Mammary epithelial cell (primary cell): ENCODE measurements at regions of chr18 and their contacts with region 1.

Region 1: GRCh38 chr18:812376-813171 is 532 bp upstream of the YES1 start:
- DNase-seq: peak; percentile 75
- H3K4me3 ChIP-seq: peak overlapping the region; percentile 75 to 100 (median 95)
- H3K27ac ChIP-seq: peak overlapping the region; percentile 92
- H3K4me1 ChIP-seq: peaks cover 6% of the 10 kb centered on the region
- H3K27me3 ChIP-seq: no peaks in the 10 kb centered on the region
- CTCF ChIP-seq: no peak

Region 2: DNA sequence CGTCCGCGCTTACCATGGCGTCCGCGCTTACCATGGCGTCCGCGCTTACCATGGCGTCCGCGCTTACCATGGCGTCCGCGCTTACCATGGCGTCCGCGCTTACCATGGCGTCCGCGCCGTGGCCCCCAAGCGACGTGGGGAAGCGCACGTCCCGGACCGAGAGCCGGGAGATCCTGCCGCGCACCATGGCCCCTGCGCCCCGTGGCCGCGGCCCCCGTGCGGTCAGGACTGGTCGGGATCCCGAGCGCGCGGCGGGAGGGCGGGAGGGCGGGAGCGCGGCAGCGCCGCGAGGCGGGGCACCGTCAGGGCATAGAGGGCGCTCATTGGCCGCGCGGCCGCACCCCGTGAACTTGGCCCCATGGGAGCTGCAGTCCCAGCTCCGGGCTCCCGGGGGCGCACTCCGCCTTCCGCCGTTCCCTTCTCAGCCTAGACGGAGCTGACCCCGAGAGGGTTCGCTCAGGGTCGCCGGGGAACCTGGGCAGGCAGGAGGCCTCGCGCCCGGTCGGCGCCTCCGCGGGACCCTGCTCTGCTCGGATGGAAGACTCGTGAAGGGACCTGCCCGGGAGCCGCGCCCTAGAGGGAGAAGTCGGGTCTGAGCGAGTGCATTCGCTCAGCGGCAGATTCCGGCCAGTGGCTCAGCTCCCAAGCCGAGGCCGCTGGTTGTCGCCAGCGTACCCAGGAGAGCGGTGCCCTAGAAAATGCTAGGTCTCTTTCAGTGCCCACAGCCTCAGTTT is 100.0 kb before region 1 on chr18 and contains the start of gene ENOSF1:
- CTCF ChIA-PET with region 1: no interaction called
- dilution Hi-C with region 1: no loop called
- in situ Hi-C with region 1: no loop called
- intact Hi-C with region 1: loop called (anchors 2 kb)
- DNase-seq: peak; percentile 73
- H3K4me3 ChIP-seq: peak within 1 kb of the TSS; percentile 62 to 92 (median 78)
- H3K27ac ChIP-seq: peak within 1 kb of the TSS; percentile 88
- H3K4me1 ChIP-seq: peaks cover 12% of the 10 kb centered on the region
- H3K27me3 ChIP-seq: no peaks in the 10 kb centered on the region
- CTCF ChIP-seq: peak; percentile 54 to 81
- total RNA-seq, gene ENOSF1: 24.5 to 78.7 TPM

Region 3: DNA sequence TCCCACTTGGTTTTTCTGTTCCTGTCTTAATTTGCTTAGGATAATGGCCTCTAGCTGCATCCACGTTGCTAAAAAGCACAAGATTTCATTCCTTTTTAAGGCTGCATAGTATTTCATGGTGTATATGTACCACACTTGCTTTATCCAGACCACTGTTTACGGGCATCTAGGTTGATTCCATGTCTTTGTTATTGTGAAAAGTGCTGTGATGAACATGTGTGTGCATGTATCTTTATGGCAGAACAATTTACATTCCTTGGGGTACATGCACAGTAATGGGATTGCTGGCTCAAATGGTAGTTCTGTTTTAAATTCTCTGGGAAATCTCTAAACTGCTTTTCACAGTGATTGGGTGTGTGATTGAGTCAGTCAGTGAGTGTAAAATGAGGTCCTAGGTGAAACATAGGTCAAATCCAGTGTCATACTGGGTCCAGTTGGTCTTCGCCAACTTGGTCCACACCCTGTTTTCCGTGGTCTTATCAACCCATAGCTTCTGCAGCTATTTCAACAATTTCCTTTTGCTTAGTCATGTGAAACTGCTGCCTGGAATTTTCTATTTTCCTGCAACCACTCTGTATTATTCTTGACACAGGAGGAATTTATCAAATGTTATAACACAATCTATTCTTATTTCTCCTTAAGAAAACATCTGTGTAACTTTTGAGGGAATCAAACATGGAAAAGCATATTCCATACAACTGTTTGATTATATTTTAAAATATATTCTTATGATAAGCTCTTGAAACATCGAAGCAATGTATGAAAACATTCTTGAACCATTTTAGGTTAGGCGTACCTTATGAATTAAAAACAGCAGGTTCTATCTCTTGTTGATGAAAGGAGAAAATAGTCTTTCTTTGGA is 175.0 kb after region 1 on chr18:
- CTCF ChIA-PET with region 1: no interaction called
- dilution Hi-C with region 1: no loop called
- in situ Hi-C with region 1: no loop called
- intact Hi-C with region 1: no loop called
- DNase-seq: no peak
- H3K4me3 ChIP-seq: no peak overlapping the region
- H3K27ac ChIP-seq: no peak overlapping the region
- H3K4me1 ChIP-seq: no peaks in the 10 kb centered on the region
- H3K27me3 ChIP-seq: no peaks in the 10 kb centered on the region
- CTCF ChIP-seq: no peak